Esophagus muscularis mucosa (tissue), 4 donors: ENCODE measurements at regions of chr12 and their contacts with region 1.

Region 1: DNA sequence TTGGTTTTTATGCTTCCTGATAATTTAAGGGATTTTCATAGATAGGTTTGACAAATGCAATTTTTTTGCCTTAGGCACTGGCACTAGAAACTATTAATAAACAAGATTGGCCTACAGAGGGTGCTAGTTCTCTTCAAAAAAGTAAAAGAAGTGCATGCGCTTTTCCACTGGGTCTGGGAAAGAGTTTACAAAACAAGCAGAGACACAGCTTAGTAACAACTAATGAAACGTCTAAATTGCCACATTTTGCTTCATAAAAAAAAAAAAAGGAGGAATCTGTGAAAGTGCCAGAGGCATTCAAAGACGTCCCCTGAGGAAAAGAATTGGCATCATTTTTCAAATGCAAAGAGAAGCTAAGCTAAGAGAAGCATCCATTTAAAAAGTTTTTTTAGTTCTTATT is 58.3 kb upstream of the EEA1 start:
- DNase-seq: no peak
- H3K4me3 ChIP-seq: no peak overlapping the region
- H3K27ac ChIP-seq: peak overlapping the region; percentile 34 to 66 (median 46)
- H3K4me1 ChIP-seq: peaks cover 10 to 15% (median 12%) of the 10 kb centered on the region in 4 donors
- H3K27me3 ChIP-seq: no peaks in the 10 kb centered on the region
- CTCF ChIP-seq: peak; percentile 58 to 64 (median 64)
- EP300 ChIP-seq: no peak
- POLR2A ChIP-seq: no peak

Region 2: DNA sequence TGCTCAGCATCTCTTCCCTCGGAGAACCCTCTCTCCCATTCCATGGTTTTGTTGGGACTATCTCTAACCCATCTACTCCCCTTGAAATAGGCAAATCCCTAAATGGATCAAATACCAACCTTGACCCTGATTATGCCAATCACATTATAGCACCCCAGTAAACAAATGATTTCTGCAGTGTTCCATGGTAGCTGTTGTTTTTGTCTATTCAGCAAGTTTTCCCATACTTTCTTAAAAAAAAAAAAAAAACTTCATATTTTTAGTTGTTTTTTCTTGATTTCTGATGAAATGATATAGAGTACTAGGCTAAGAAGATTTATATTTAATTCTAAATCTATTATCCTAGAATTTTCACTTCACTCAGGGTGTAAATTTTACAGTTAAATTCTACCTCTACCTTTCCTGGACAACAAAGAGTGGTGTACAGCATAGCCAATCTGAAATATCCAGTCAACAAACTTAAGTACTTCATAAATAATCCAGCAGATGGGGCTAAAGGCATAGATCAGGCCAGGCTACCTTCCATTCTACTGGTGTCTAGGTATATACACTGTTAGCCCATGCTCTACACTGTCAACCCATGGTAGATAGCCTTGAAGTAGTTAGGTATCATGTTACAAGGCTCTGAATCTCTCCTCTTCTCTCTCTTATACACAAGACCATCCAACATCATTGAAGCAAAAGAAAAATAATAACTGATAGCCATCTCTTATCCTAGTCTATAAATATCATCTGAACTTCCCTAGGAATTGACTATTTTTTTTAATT is 202.4 kb before region 1 on chr12:
- intact Hi-C with region 1: loop called (anchors 5 kb)
- DNase-seq: no peak
- H3K4me3 ChIP-seq: no peak overlapping the region
- H3K27ac ChIP-seq: no peak overlapping the region
- H3K4me1 ChIP-seq: no peaks in the 10 kb centered on the region
- H3K27me3 ChIP-seq: no peaks in the 10 kb centered on the region
- CTCF ChIP-seq: peak; percentile 44 to 60 (median 45)
- EP300 ChIP-seq: no peak
- POLR2A ChIP-seq: no peak

Region 3: DNA sequence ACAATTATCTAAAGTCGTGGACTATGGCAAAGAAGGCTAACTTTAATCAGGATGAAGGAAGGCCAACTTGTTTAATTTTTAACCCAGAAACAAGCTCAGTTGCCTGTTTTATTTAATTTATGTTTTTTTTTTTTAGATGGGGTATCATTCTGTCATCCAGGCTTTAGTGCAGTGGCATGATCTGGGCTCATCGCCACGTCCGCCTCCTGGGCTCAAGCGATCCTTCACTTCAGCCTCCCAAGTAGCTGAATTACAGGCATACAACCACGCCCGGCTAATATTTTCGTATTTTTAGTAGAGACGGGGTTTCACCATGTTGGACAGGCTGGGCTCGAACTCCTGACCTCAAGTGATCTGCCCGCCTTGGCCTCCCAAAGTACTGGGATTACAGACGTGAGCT is 410.1 kb after region 1 on chr12:
- intact Hi-C with region 1: loop called (anchors 2 kb)
- DNase-seq: no peak
- H3K4me3 ChIP-seq: no peak overlapping the region
- H3K27ac ChIP-seq: peak overlapping the region in 3 of 4 donors; percentile 33 to 62 (median 35)
- H3K4me1 ChIP-seq: peaks cover 3 to 45% (median 41%) of the 10 kb centered on the region in 4 donors
- H3K27me3 ChIP-seq: no peaks in the 10 kb centered on the region
- CTCF ChIP-seq: no peak
- EP300 ChIP-seq: no peak
- POLR2A ChIP-seq: no peak

Region 4: DNA sequence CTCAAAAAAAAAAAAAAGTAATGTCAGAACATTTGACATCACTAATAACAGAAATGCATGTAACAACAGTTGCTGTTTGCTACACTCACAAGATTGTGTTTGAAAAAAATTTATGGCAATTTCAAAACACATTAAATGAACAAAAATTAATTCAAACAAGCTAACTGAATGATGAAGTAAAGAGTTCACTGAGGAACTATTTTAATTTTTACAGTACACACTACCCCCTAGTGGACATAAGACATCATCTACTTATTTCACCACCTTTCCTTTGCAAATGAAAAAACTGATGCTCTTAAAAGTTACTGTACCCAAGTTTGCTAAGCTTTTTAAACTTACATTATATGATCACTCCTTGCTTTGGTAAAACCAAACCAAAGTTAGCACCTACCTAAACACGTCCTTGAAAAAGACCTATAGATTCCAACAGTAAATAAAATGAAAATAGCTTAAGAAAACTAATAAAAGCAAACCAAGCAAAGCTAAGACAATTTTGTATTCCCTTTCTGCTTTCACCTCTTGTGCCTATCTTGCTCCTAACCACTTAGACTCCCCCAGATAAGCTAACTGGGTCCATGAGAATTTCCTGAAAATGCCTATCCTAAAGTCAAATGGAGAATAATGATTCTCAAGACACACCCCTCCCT is 432.1 kb after region 1 on chr12:
- intact Hi-C with region 1: loop called (anchors 2 kb)
- DNase-seq: no peak
- H3K4me3 ChIP-seq: peak overlapping the region in 1 of 4 donors; percentile 24
- H3K27ac ChIP-seq: no peak overlapping the region
- H3K4me1 ChIP-seq: peaks cover 38 to 65% (median 59%) of the 10 kb centered on the region in 4 donors
- H3K27me3 ChIP-seq: no peaks in the 10 kb centered on the region
- CTCF ChIP-seq: peak; percentile 60 to 74 (median 70)
- EP300 ChIP-seq: no peak
- POLR2A ChIP-seq: no peak

Region 5: GRCh38 chr12:94101738-94102660 is 1114.6 kb after region 1 on chr12:
- intact Hi-C with region 1: loop called (anchors 10 kb)
- DNase-seq: peak; percentile 98
- H3K4me3 ChIP-seq: peak overlapping the region; percentile 58 to 82 (median 64)
- H3K27ac ChIP-seq: peak overlapping the region; percentile 22 to 60 (median 56)
- H3K4me1 ChIP-seq: peaks cover 13 to 17% (median 15%) of the 10 kb centered on the region in 4 donors
- H3K27me3 ChIP-seq: peaks cover 0 to 15% (median 0%) of the 10 kb centered on the region in 4 donors
- CTCF ChIP-seq: peak; percentile 83 to 88 (median 87)
- EP300 ChIP-seq: no peak
- POLR2A ChIP-seq: no peak